Activated T-helper 2 cell treated with anti-CD3 and anti-CD28 coated beads, Interferon-gamma antibody, Interleukin-2, Interleukin-4, amounts not matched to agents 10 μg/mL and 5 μg/mL and 100 μg/mL, durations not matched to agents 14 hours and 24 hours and 36 hours (primary cell): ENCODE measurements at regions of chr6 and their contacts with region 1.

Region 1: DNA sequence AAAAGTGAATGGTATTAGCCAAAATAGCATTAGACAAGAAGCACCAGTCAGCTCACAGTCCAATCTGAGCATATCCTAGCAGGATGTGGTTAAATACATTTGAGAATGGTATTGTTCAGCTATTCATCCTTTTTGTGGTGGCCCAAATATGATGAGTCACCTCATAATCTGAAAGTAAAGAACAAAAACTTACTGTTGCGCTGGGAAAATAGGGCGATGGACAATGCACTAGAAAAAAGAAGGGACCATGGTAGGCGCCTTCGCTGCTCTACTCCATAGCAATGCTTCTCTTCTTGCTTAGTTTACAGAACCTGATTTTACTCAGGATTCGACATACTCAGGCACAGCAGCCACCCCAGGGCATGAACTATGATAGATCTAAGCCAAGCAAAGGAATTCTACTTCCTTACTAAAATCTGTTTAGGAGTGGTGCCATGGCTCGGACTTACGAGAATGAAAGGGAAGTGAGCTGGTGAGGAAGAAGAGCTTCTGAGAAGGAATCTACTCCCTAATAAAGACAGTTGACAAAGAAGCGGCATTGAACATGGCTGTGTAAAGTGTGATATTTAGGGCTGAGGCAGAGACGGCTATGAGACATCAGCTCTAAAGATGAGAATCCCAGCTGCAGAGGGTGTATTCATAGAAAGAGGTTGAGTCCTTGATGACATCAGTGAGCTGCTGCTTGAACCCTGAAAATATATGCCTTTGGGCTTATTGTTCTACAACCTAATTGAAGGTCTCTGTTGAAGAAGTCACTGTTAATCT is 16.6 kb upstream of the FBXO9 start:
- DNase-seq: no peak
- H3K4me3 Mint-ChIP-seq: peak overlapping the region; percentile 13
- H3K27ac Mint-ChIP-seq: peak overlapping the region; percentile 1
- H3K4me1 Mint-ChIP-seq: peaks cover 21% of the 10 kb centered on the region
- H3K27me3 Mint-ChIP-seq: no peaks in the 10 kb centered on the region

Region 2: DNA sequence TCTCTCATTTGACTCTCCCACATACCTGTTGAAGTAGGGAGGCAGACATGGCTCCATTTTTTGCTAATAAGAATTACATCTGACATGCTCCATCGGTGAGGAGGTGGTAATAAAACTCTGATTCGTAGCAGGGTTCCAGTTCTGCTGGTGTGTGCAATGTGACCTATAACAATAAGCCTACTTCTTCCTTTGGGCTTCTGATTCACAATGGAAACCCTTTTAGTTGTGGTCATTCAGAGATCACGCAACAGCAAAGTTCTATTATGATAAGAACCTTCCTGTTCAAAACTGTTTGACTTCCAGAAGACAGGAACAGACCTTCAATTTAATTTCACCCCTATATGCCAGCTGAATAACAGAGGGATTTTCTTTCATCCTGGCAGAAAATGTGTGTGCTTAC is 22.1 kb before region 1 on chr6:
- intact Hi-C with region 1: loop called (anchors 2 kb)
- DNase-seq: no peak
- H3K4me3 Mint-ChIP-seq: no peak overlapping the region
- H3K27ac Mint-ChIP-seq: peak overlapping the region; percentile 64
- H3K4me1 Mint-ChIP-seq: peaks cover 25% of the 10 kb centered on the region
- H3K27me3 Mint-ChIP-seq: no peaks in the 10 kb centered on the region

Region 3: GRCh38 chr6:53095716-53096115 is 47.1 kb after region 1 on chr6:
- intact Hi-C with region 1: no loop called
- DNase-seq: no peak
- H3K4me3 Mint-ChIP-seq: no peak overlapping the region
- H3K27ac Mint-ChIP-seq: no peak overlapping the region
- H3K4me1 Mint-ChIP-seq: peaks cover 5% of the 10 kb centered on the region
- H3K27me3 Mint-ChIP-seq: no peaks in the 10 kb centered on the region